Naive thymus-derived CD4-positive, alpha-beta T cell (primary cell): ENCODE measurements at regions of chr15 and their contacts with region 1.

Region 1: DNA sequence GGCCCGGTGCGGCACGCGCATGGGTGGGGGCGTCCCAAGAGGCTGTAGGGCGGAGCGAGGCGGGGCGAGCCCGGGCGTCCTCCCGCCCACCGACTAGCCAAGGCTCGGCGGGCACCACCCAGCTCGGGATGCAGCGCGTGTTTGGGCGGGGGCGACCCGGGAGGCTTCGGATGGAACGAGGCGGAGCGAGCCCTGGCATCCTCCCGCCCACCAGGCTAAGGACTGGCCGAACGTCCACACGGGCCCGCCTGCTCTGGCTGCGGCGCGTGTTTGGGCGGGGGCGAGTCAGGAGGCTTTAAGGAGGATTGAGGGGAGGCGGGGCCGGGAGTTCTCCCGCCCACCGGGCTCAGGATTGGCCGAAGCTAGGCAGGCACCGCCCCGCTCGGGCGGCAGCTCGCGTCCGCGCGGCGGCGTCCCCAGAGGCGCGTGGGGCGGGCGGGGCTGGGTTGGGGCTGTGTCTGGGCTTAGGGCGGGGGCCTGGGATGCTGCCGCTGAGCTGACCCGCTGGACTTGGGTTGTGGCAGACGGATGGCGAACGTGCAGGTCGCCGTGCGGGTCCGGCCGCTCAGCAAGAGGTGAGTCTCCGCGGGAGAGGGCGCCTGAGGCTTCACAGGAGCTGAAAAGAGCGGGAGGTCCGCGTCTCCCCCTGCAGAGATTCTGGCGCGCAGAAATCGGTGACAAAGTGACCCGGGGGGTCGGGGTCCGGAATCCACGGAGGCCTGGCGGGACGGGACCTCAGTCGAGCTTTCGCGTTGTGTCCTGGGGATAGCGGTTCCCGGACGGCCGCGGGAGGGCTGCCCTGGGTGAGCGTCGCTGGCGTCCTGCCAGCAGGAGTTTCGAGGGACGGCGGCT is at the start of gene STARD9:
- DNase-seq: peak; percentile 84 to 96 (median 93)
- ATAC-seq: peak; percentile 96
- H3K4me3 ChIP-seq: peak within 1 kb of the TSS; percentile 81
- H3K4me3 Mint-ChIP-seq: peak within 1 kb of the TSS; percentile 74 to 95 (median 92)
- H3K27ac ChIP-seq: peak within 1 kb of the TSS; percentile 58
- H3K27ac Mint-ChIP-seq: peak within 1 kb of the TSS; percentile 10 to 84 (median 76)
- H3K4me1 ChIP-seq: peaks cover 7 to 12% of the 10 kb centered on the region in 2 donors
- H3K4me1 Mint-ChIP-seq: peaks cover 14 to 36% (median 19%) of the 10 kb centered on the region in 7 donors
- H3K27me3 ChIP-seq: no peaks in the 10 kb centered on the region
- H3K27me3 Mint-ChIP-seq: peaks cover 6 to 35% (median 13%) of the 10 kb centered on the region in 5 donors
- total RNA-seq, gene STARD9: 2.4 to 10.5 (median 4.5) TPM

Region 2: GRCh38 chr15:42548253-42549031 is 27.0 kb before region 1 on chr15 and contains the starts of genes HAUS2 and LRRC57:
- CTCF ChIA-PET with region 1: no interaction called
- POLR2A ChIA-PET with region 1: interaction called, 12 read pairs
- intact Hi-C with region 1: loop called (anchors 1 kb)
- DNase-seq: peak; percentile 79 to 93 (median 86)
- ATAC-seq: peak; percentile 89
- H3K4me3 ChIP-seq: peak within 1 kb of the TSS; percentile 86
- H3K4me3 Mint-ChIP-seq: peak within 1 kb of the TSS; percentile 93 to 99 (median 96)
- H3K27ac ChIP-seq: peak within 1 kb of the TSS; percentile 93
- H3K27ac Mint-ChIP-seq: peak within 1 kb of the TSS; percentile 95 to 99 (median 97)
- H3K4me1 ChIP-seq: peaks cover 21 to 23% of the 10 kb centered on the region in 2 donors
- H3K4me1 Mint-ChIP-seq: peaks cover 29 to 62% (median 51%) of the 10 kb centered on the region in 7 donors
- H3K27me3 ChIP-seq: no peaks in the 10 kb centered on the region
- H3K27me3 Mint-ChIP-seq: no peaks in the 10 kb centered on the region
- total RNA-seq, gene HAUS2: 12.0 to 35.4 (median 16.8) TPM
- total RNA-seq, gene LRRC57: 15.4 to 37.1 (median 18.0) TPM

Region 3: DNA sequence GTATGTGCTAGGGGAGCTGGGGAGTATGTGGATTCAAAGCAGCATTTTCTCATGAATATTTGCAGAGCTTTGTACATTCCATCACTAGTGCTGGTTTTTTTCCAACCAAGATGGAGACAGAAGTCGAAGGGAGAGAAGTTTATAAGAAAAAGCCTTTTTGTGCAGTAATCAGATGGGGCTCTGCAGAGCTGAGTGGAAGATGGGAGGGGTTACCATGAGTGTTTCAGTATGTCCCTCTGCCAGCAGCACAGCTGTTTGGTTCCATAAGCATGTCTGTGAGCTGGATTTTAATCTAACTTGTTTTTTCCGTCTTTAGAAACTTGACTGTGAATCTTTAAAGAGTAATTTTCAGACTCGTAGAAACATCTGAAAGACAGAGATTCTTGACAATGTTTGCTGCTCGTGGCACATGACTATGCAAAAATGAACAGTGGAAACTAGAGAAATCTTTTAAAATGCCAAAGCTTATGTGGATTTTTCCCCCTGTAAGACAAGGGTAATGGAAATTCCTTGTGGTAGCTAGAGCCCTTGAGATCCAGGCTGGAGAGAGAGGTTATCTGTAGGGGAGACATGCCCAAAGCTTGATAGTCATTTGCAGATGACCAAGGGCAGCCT is 20.3 kb after region 1 on chr15:
- CTCF ChIA-PET with region 1: no interaction called
- POLR2A ChIA-PET with region 1: no interaction called
- intact Hi-C with region 1: no loop called
- DNase-seq: no peak
- ATAC-seq: no peak
- H3K4me3 ChIP-seq: no peak overlapping the region
- H3K4me3 Mint-ChIP-seq: no peak overlapping the region
- H3K27ac ChIP-seq: no peak overlapping the region
- H3K27ac Mint-ChIP-seq: peak overlapping the region in 1 of 9 donors; percentile 60
- H3K4me1 ChIP-seq: no peaks in the 10 kb centered on the region
- H3K4me1 Mint-ChIP-seq: peaks cover 0 to 2% (median 0%) of the 10 kb centered on the region in 7 donors
- H3K27me3 ChIP-seq: no peaks in the 10 kb centered on the region
- H3K27me3 Mint-ChIP-seq: no peaks in the 10 kb centered on the region

Region 4: DNA sequence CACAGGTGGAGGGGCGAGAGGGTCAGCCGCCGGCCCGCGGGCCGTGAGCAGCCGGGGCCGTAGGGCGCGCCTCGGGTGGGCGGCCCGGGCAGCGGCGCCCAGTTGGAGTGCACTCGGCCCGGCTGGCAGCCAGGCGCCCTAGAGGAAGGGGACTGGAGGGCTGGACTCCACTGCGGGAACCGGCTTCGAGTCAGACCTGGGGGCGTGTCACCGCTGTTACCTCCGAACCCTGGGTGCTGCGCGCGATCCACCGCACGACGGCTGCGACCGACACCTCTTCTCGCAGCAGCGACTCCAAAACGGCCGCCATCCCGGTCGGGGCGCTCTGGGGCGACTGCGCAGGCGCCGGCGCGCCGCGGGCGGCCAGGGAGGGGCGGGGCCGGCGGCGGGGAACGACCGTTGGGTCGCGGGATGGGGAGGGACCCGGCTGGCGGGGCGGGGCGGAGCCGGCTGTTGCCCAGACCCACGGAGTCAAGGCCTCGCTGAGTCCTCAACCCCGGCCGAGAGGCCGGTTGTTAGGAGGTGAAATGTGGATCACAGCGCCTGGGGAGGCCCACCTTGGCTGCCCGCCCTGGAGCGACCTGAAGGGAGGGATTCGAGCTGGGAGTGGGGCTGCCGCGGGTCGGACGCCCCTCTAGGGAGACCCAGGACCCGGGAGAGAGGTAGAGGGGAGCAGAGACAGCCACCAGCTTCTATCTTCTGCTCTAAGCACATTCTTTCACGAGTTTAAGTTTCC is 161.5 kb after region 1 on chr15 and contains the start of gene CDAN1:
- CTCF ChIA-PET with region 1: no interaction called
- POLR2A ChIA-PET with region 1: no interaction called
- intact Hi-C with region 1: loop called in 1 of 2 experiments (anchors 2 kb)
- DNase-seq: peak; percentile 80 to 95 (median 87)
- ATAC-seq: peak; percentile 97
- H3K4me3 ChIP-seq: peak within 1 kb of the TSS; percentile 65
- H3K4me3 Mint-ChIP-seq: peak within 1 kb of the TSS; percentile 79 to 90 (median 86)
- H3K27ac ChIP-seq: peak within 1 kb of the TSS; percentile 87
- H3K27ac Mint-ChIP-seq: peak within 1 kb of the TSS; percentile 78 to 91 (median 86)
- H3K4me1 ChIP-seq: peaks cover 5 to 6% of the 10 kb centered on the region in 2 donors
- H3K4me1 Mint-ChIP-seq: peaks cover 13 to 26% (median 20%) of the 10 kb centered on the region in 7 donors
- H3K27me3 ChIP-seq: no peaks in the 10 kb centered on the region
- H3K27me3 Mint-ChIP-seq: no peaks in the 10 kb centered on the region
- total RNA-seq, gene CDAN1: 25.8 to 38.0 (median 28.3) TPM